Transverse colon (tissue), 4 donors: ENCODE measurements at regions of chr10 and their contacts with region 1.

Region 1: DNA sequence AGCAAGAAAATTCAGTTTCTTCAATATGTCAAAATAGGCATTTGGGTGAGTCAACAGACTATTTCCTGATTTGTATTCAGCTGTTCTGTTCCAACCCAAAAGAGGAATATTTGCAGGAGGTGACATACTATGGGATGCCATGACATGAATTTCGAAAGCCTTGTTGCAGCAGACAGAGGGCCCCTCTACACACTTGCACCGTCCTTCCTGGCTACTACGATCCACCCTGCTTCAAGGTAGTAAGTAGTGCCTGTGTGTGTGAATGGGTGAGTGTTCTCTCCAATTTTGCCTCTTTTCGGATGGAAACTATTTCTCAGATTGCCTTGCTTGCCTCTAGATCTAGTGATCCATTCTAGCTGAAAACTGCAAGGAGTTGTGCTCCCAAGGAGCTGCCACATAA is 413.0 kb upstream of the ADARB2 start:
- DNase-seq: no peak
- H3K4me3 ChIP-seq: no peak overlapping the region
- H3K27ac ChIP-seq: no peak overlapping the region
- H3K4me1 ChIP-seq: no peaks in the 10 kb centered on the region
- H3K27me3 ChIP-seq: no peaks in the 10 kb centered on the region
- CTCF ChIP-seq: no peak
- EP300 ChIP-seq: no peak
- POLR2A ChIP-seq: no peak

Region 2: GRCh38 chr10:1084011-1084950 is 1066.0 kb before region 1 on chr10:
- in situ Hi-C with region 1: no loop called
- intact Hi-C with region 1: loop called (anchors 5 kb)
- DNase-seq: no peak
- H3K4me3 ChIP-seq: no peak overlapping the region
- H3K27ac ChIP-seq: no peak overlapping the region
- H3K4me1 ChIP-seq: peaks cover 0 to 4% (median under 1%) of the 10 kb centered on the region in 4 donors
- H3K27me3 ChIP-seq: no peaks in the 10 kb centered on the region
- CTCF ChIP-seq: no peak
- EP300 ChIP-seq: no peak
- POLR2A ChIP-seq: no peak

Region 3: DNA sequence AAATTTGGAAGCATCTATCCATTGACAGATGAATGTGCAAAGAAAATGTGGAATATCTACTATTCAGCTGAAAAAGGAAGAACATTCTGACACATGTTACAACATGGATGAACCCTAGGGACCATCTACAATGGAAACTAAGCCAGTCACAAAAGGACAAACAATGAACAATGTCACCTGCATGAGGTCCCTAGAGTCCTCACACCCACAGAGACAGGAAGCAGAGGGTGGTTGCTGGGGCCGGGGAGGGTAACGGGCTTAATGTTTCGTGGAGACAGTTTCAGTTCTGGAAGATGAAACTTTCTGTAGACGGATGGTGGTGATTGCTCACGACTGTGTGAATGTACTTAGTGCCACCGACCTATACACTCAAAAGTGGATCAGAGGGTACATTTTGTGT is 695.9 kb before region 1 on chr10:
- in situ Hi-C with region 1: no loop called
- intact Hi-C with region 1: no loop called
- DNase-seq: no peak
- H3K4me3 ChIP-seq: no peak overlapping the region
- H3K27ac ChIP-seq: no peak overlapping the region
- H3K4me1 ChIP-seq: no peaks in the 10 kb centered on the region
- H3K27me3 ChIP-seq: peaks cover 6% of the 10 kb centered on the region
- CTCF ChIP-seq: no peak
- EP300 ChIP-seq: no peak
- POLR2A ChIP-seq: no peak